ENCODE measurements at regions of chr2 and their contacts with region 1.

Region 1: GRCh38 chr2:219402665-219403515 is 15.2 kb upstream of the DNPEP start:
- DNase-seq: peak; percentile 66
- ATAC-seq: peak; percentile 80
- H3K4me3 ChIP-seq: no peak overlapping the region
- H3K27ac ChIP-seq: no peak overlapping the region
- H3K4me1 ChIP-seq: peaks cover 17% of the 10 kb centered on the region
- H3K27me3 ChIP-seq: no peaks in the 10 kb centered on the region
- CTCF ChIP-seq: peak; percentile 91

Region 2: DNA sequence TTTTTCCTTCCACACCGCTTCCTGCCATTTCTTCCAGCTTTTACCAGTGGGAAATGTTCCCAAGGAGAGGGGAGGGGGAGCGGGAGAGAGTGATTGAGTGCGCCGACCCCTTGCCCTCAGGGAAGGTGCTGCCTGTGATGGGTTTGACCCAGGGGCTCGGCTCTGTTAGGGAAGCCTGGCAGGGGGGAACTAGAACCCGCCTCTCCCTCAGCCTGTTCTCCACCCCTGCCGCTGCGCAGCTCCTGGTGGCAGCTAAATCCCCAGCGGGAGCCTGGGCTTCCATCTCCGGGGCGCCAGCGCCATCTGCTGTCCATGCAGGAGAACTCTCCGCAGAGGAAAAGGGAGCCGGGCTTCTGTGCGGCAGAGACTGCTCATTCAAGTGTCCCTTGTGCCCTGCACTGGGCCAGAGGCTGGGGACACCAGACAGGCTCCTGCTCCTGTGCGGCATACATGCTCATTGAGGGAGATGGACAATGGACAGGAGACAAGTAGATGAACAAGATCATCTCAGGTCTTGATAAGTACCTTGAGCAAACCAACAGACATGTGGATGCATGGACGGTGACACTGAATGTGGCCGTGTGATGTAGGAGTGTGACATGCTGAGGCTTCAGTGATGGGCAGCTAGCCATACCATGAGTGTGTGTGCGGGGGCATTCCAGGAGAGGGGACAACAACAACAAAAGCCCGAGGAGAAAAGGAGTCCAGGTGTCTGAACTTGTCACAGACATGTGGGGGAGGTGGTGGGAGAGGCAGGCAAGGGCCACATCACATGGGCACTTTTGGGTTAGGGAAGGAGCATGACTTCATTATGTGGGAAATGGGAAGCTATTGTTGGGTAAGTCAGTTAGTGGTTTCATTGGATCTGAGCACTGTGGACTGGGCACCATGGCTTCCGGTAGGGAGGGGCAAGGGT is 127.4 kb after region 1 on chr2:
- intact Hi-C with region 1: loop called (anchors 10 kb)
- DNase-seq: peak; percentile 88
- ATAC-seq: peak; percentile 90 to 91
- H3K4me3 ChIP-seq: no peak overlapping the region
- H3K27ac ChIP-seq: no peak overlapping the region
- H3K4me1 ChIP-seq: no peaks in the 10 kb centered on the region
- H3K27me3 ChIP-seq: peaks cover 80% of the 10 kb centered on the region
- CTCF ChIP-seq: peak; percentile 96